MCF 10A (cell line): ENCODE measurements at regions of chr12 and their contacts with region 1.

Region 1: GRCh38 chr12:104108755-104109445 is 29.1 kb downstream of the NFYB start:
- DNase-seq: peak; percentile 86
- H3K4me3 Mint-ChIP-seq: no peak overlapping the region
- H3K27ac Mint-ChIP-seq: no peak overlapping the region
- H3K4me1 Mint-ChIP-seq: peaks cover 15% of the 10 kb centered on the region
- H3K27me3 Mint-ChIP-seq: no peaks in the 10 kb centered on the region
- CTCF ChIP-seq: peak; percentile 80

Region 2: GRCh38 chr12:103806803-103807202 is 302.1 kb before region 1 on chr12:
- CTCF ChIA-PET with region 1: no interaction called
- POLR2A ChIA-PET with region 1: no interaction called
- intact Hi-C with region 1: no loop called
- DNase-seq: peak; percentile 27
- H3K4me3 Mint-ChIP-seq: no peak overlapping the region
- H3K27ac Mint-ChIP-seq: no peak overlapping the region
- H3K4me1 Mint-ChIP-seq: peaks cover 37% of the 10 kb centered on the region
- H3K27me3 Mint-ChIP-seq: no peaks in the 10 kb centered on the region
- CTCF ChIP-seq: no peak

Region 3: GRCh38 chr12:103884316-103884715 is 224.6 kb before region 1 on chr12:
- CTCF ChIA-PET with region 1: interaction called, 22 read pairs
- POLR2A ChIA-PET with region 1: no interaction called
- intact Hi-C with region 1: no loop called
- DNase-seq: peak; percentile 40
- H3K4me3 Mint-ChIP-seq: no peak overlapping the region
- H3K27ac Mint-ChIP-seq: no peak overlapping the region
- H3K4me1 Mint-ChIP-seq: peaks cover 8% of the 10 kb centered on the region
- H3K27me3 Mint-ChIP-seq: no peaks in the 10 kb centered on the region
- CTCF ChIP-seq: peak; percentile 30

Region 4: GRCh38 chr12:103965590-103966504 is 143.1 kb before region 1 on chr12 and contains the start of gene TDG:
- CTCF ChIA-PET with region 1: interaction called, 40 read pairs
- POLR2A ChIA-PET with region 1: interaction called, 27 read pairs
- intact Hi-C with region 1: loop called (anchors 1 kb)
- DNase-seq: peak; percentile 98
- H3K4me3 Mint-ChIP-seq: peak within 1 kb of the TSS; percentile 92
- H3K27ac Mint-ChIP-seq: peak within 1 kb of the TSS; percentile 97
- H3K4me1 Mint-ChIP-seq: peaks cover 28% of the 10 kb centered on the region
- H3K27me3 Mint-ChIP-seq: no peaks in the 10 kb centered on the region
- CTCF ChIP-seq: peak; percentile 28
- total RNA-seq, gene TDG: 31.6 and 31.8 TPM in 2 replicates

Region 5: GRCh38 chr12:104057771-104058197 is 51.1 kb before region 1 on chr12:
- CTCF ChIA-PET with region 1: interaction called, 24 read pairs
- POLR2A ChIA-PET with region 1: interaction called, 3 read pairs
- intact Hi-C with region 1: loop called (anchors 1 kb)
- DNase-seq: peak; percentile 35
- H3K4me3 Mint-ChIP-seq: no peak overlapping the region
- H3K27ac Mint-ChIP-seq: no peak overlapping the region
- H3K4me1 Mint-ChIP-seq: peaks cover 28% of the 10 kb centered on the region
- H3K27me3 Mint-ChIP-seq: no peaks in the 10 kb centered on the region
- CTCF ChIP-seq: peak; percentile 71

Region 6: DNA sequence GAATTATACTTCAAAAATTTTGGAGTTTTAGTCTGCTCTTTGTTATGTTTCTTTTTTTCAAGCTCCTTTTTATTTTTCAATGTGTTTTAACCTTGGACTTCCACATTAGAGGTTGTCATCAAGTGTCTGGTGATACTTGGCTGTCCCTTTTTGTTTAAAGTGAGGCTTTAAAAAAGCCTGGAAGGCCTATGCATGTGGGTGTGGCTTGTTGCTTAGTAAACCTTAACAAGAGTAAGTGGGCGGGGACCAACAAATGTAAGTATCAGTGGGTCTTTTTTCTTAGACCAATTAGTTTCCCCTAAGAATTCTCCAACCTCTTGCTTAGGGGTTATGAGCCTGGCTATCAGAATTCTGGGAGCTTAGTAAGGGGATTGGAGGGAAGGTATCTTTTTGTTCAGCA is 18.2 kb before region 1 on chr12:
- CTCF ChIA-PET with region 1: interaction called, 82 read pairs
- POLR2A ChIA-PET with region 1: no interaction called
- intact Hi-C with region 1: no loop called
- DNase-seq: no peak
- H3K4me3 Mint-ChIP-seq: no peak overlapping the region
- H3K27ac Mint-ChIP-seq: peak overlapping the region; percentile 31
- H3K4me1 Mint-ChIP-seq: no peaks in the 10 kb centered on the region
- H3K27me3 Mint-ChIP-seq: no peaks in the 10 kb centered on the region
- CTCF ChIP-seq: no peak

Region 7: GRCh38 chr12:104137913-104138796 is 29.3 kb after region 1 on chr12 and contains the start of gene NFYB:
- CTCF ChIA-PET with region 1: interaction called, 11 read pairs
- POLR2A ChIA-PET with region 1: interaction called, 5 read pairs
- intact Hi-C with region 1: no loop called
- DNase-seq: peak; percentile 99
- H3K4me3 Mint-ChIP-seq: peak within 1 kb of the TSS; percentile 78
- H3K27ac Mint-ChIP-seq: peak within 1 kb of the TSS; percentile 46
- H3K4me1 Mint-ChIP-seq: peaks cover 8% of the 10 kb centered on the region
- H3K27me3 Mint-ChIP-seq: no peaks in the 10 kb centered on the region
- CTCF ChIP-seq: no peak
- total RNA-seq, gene NFYB: 24.8 and 27.0 TPM in 2 replicates